HepG2 (cell line): ENCODE measurements at regions of chr1 and their contacts with region 1.

Region 1: DNA sequence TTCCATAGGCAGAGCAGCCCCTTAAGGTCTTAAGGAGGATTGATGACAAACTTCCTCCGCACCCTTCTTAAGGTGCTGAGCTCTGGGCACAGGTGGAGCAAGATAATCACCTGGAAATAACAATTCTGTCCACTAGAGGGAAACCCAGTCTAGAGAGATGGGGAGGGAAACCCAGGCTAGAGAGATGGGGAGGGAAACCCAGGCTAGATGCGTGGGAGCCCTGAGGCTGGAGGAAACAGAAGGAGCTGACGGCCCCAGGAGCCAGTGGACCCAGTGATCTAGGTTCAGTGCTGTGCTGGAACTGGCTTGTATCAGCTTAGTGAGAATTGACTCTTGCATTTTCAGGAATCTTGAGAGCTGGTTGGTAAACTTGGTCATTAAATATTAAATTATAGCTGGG is 17.8 kb upstream of the MYCL start:
- DNase-seq: peak; percentile 61
- ATAC-seq: peak; percentile 86
- H3K4me3 ChIP-seq: no peak overlapping the region
- H3K27ac ChIP-seq: no peak overlapping the region
- H3K4me1 ChIP-seq: peaks cover 14% of the 10 kb centered on the region
- H3K27me3 ChIP-seq: peaks cover 0 to 13% of the 10 kb centered on the region in 2 experiments; a peak in 3 of 5 replicates
- CTCF ChIP-seq: peak; percentile 82
- EP300 ChIP-seq: no peak
- POLR2A ChIP-seq: no peak
- RAD21 ChIP-seq: peak; percentile 72; the same call in 1 of the 2 replicates

Region 2: GRCh38 chr1:39876144-39876543 is 43.4 kb before region 1 on chr1:
- CTCF ChIA-PET with region 1: no interaction called
- POLR2A ChIA-PET with region 1: no interaction called
- in situ Hi-C with region 1: no loop called
- intact Hi-C with region 1: no loop called
- DNase-seq: no peak
- ATAC-seq: no peak
- H3K4me3 ChIP-seq: no peak overlapping the region
- H3K27ac ChIP-seq: no peak overlapping the region
- H3K4me1 ChIP-seq: peaks cover 59% of the 10 kb centered on the region
- H3K27me3 ChIP-seq: no peaks in the 10 kb centered on the region
- CTCF ChIP-seq: no peak
- EP300 ChIP-seq: no peak
- POLR2A ChIP-seq: no peak
- RAD21 ChIP-seq: no peak

Region 3: DNA sequence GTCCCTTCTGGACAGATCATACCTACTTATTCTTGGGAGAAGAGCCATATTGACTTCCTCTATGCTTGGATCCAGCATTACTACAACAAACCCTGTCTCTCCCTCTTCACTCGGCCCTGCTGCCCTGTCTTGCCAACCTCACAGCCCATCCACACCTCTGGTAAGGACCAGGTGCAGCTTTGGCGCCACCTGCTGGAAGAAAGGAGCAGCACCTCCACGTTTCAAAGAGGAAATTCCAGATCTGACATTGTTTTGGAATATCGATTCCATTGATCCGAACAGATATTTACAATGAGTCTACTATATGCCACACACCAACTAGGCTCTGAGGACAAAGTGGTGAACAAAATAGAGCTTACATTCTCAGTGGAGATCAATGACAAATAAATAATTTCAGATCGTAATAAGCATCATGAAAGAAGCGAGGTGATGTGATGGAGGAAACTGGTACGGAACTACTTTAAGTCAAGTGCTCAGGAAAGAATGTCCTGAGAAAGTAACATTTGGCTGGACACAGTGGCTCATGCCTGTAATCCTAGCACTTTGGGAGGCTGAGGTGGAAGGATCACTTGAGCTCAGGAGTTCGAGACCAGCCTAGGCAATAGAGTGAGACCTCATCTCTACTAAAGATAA is 54.1 kb after region 1 on chr1:
- CTCF ChIA-PET with region 1: interaction called, 36 read pairs
- POLR2A ChIA-PET with region 1: interaction called, 3 read pairs
- in situ Hi-C with region 1: loop called (anchors 5 kb)
- intact Hi-C with region 1: no loop called
- DNase-seq: peak; percentile 49
- ATAC-seq: peak; percentile 83
- H3K4me3 ChIP-seq: no peak overlapping the region
- H3K27ac ChIP-seq: no peak overlapping the region
- H3K4me1 ChIP-seq: peaks cover 8% of the 10 kb centered on the region; the same call in 1 of the 2 replicates
- H3K27me3 ChIP-seq: peaks cover 0 to 3% of the 10 kb centered on the region in 2 experiments; a peak in 1 of 5 replicates
- CTCF ChIP-seq: peak; percentile 96
- EP300 ChIP-seq: no peak
- POLR2A ChIP-seq: no peak
- RAD21 ChIP-seq: peak; percentile 91